B cell (primary cell): ENCODE measurements at regions of chr1 and their contacts with region 1.

Region 1: DNA sequence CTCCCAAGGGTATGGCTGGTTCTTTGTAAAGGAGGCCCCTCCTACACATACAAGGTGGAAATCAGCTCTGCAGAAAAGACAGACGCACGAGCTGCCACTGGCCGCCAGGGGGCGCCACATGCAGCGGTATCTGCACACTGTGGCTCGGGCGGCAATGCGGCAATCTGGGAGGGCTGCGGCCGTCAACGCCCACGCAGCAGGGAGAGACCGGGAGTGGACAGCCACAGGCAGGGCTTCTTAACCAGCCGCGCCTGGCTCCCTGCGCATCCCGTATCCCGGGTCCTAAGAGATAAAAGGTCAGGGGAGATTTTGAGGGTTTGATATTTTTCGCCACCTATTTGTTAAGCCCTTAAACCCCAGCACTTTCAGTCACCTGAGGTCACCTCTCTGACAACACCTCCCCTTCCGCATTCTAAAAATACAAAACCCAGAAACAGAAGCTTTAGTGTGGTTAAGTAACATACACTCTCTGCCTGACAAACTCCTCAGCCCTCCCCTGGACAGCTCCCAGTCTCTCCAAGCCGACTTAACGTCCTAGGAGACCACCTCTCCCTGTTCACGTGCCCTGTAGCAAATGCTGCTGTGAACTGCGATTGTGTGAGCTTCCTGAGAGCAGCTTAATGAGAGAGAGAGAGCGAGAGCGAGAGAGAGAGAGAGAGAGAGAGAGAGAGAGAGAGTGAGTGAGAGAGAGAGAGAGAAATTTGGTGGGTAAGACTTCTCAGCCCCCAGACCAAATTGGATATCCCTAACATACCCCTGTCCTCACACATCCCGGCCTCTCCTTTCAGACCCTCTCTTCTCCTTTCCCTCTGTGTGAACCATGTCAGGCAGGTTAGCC is 13.5 kb upstream of the KCNA2 start:
- DNase-seq: peak; percentile 94
- ATAC-seq: peak; percentile 86
- H3K4me3 ChIP-seq: peak overlapping the region; percentile 16 to 77 (median 72)
- H3K4me3 Mint-ChIP-seq: peak overlapping the region; percentile 91
- H3K27ac ChIP-seq: peak overlapping the region; percentile 66 to 89
- H3K27ac Mint-ChIP-seq: peak overlapping the region; percentile 95
- H3K4me1 ChIP-seq: peaks cover 20 to 30% of the 10 kb centered on the region in 2 donors
- H3K4me1 Mint-ChIP-seq: peaks cover 30% of the 10 kb centered on the region
- H3K27me3 ChIP-seq: peaks cover 0 to 5% (median 2%) of the 10 kb centered on the region in 4 experiments
- H3K27me3 Mint-ChIP-seq: peaks cover 4% of the 10 kb centered on the region
- CTCF ChIP-seq: peak; percentile 95

Region 2: GRCh38 chr1:110554871-110555801 is 64.5 kb before region 1 on chr1:
- CTCF ChIA-PET with region 1: interaction called, 16 read pairs
- POLR2A ChIA-PET with region 1: no interaction called
- intact Hi-C with region 1: no loop called
- DNase-seq: peak; percentile 74
- ATAC-seq: peak; percentile 93
- H3K4me3 ChIP-seq: peak overlapping the region in 2 of 5 experiments; percentile 20 to 27
- H3K4me3 Mint-ChIP-seq: peak overlapping the region; percentile 50
- H3K27ac ChIP-seq: no peak overlapping the region
- H3K27ac Mint-ChIP-seq: no peak overlapping the region
- H3K4me1 ChIP-seq: peaks cover 9 to 12% of the 10 kb centered on the region in 2 donors
- H3K4me1 Mint-ChIP-seq: peaks cover 4% of the 10 kb centered on the region
- H3K27me3 ChIP-seq: peaks cover 0 to 57% (median 24%) of the 10 kb centered on the region in 4 experiments
- H3K27me3 Mint-ChIP-seq: peaks cover 78% of the 10 kb centered on the region
- CTCF ChIP-seq: peak; percentile 83

Region 3: GRCh38 chr1:110576441-110576840 is 43.2 kb before region 1 on chr1:
- CTCF ChIA-PET with region 1: no interaction called
- POLR2A ChIA-PET with region 1: no interaction called
- intact Hi-C with region 1: no loop called
- DNase-seq: no peak
- ATAC-seq: no peak
- H3K4me3 ChIP-seq: no peak overlapping the region
- H3K4me3 Mint-ChIP-seq: no peak overlapping the region
- H3K27ac ChIP-seq: no peak overlapping the region
- H3K27ac Mint-ChIP-seq: no peak overlapping the region
- H3K4me1 ChIP-seq: no peaks in the 10 kb centered on the region
- H3K4me1 Mint-ChIP-seq: no peaks in the 10 kb centered on the region
- H3K27me3 ChIP-seq: peaks cover 0 to 28% (median 5%) of the 10 kb centered on the region in 4 experiments
- H3K27me3 Mint-ChIP-seq: peaks cover 33% of the 10 kb centered on the region
- CTCF ChIP-seq: no peak

Region 4: GRCh38 chr1:110630839-110631663 is 11.4 kb after region 1 on chr1:
- CTCF ChIA-PET with region 1: interaction called, 59 read pairs
- POLR2A ChIA-PET with region 1: interaction called, 5 read pairs
- intact Hi-C with region 1: loop called (anchors 1 kb)
- DNase-seq: peak; percentile 86
- ATAC-seq: peak; percentile 76
- H3K4me3 ChIP-seq: peak overlapping the region in 2 of 5 experiments; percentile 13 to 28
- H3K4me3 Mint-ChIP-seq: no peak overlapping the region
- H3K27ac ChIP-seq: peak overlapping the region in 1 of 2 donors; percentile 65
- H3K27ac Mint-ChIP-seq: no peak overlapping the region
- H3K4me1 ChIP-seq: peaks cover 56 to 65% of the 10 kb centered on the region in 2 donors
- H3K4me1 Mint-ChIP-seq: peaks cover 43% of the 10 kb centered on the region
- H3K27me3 ChIP-seq: no peaks in the 10 kb centered on the region
- H3K27me3 Mint-ChIP-seq: no peaks in the 10 kb centered on the region
- CTCF ChIP-seq: peak; percentile 88

Region 5: GRCh38 chr1:110674337-110675059 is 54.9 kb after region 1 on chr1 and contains the start of gene KCNA3:
- CTCF ChIA-PET with region 1: interaction called, 17 read pairs
- POLR2A ChIA-PET with region 1: interaction called, 5 read pairs
- intact Hi-C with region 1: loop called (anchors 1 kb)
- DNase-seq: peak; percentile 79
- ATAC-seq: peak; percentile 59
- H3K4me3 ChIP-seq: peak within 1 kb of the TSS in 4 of 5 experiments; percentile 50 to 67 (median 62)
- H3K4me3 Mint-ChIP-seq: peak within 1 kb of the TSS; percentile 84
- H3K27ac ChIP-seq: peak within 1 kb of the TSS; percentile 68 to 76
- H3K27ac Mint-ChIP-seq: peak within 1 kb of the TSS; percentile 81
- H3K4me1 ChIP-seq: peaks cover 38 to 43% of the 10 kb centered on the region in 2 donors
- H3K4me1 Mint-ChIP-seq: peaks cover 54% of the 10 kb centered on the region
- H3K27me3 ChIP-seq: no peaks in the 10 kb centered on the region
- H3K27me3 Mint-ChIP-seq: no peaks in the 10 kb centered on the region
- CTCF ChIP-seq: peak; percentile 48
- total RNA-seq, gene KCNA3: 60.0 and 62.5 TPM in 2 replicates

Region 6: GRCh38 chr1:110766025-110766647 is 146.5 kb after region 1 on chr1:
- CTCF ChIA-PET with region 1: interaction called, 228 read pairs
- POLR2A ChIA-PET with region 1: interaction called, 13 read pairs
- intact Hi-C with region 1: loop called (anchors 1 kb)
- DNase-seq: peak; percentile 77
- ATAC-seq: peak; percentile 73
- H3K4me3 ChIP-seq: no peak overlapping the region
- H3K4me3 Mint-ChIP-seq: no peak overlapping the region
- H3K27ac ChIP-seq: no peak overlapping the region
- H3K27ac Mint-ChIP-seq: no peak overlapping the region
- H3K4me1 ChIP-seq: peaks cover 0 to 3% of the 10 kb centered on the region in 2 donors
- H3K4me1 Mint-ChIP-seq: peaks cover 2% of the 10 kb centered on the region
- H3K27me3 ChIP-seq: peaks cover 0 to 8% (median 3%) of the 10 kb centered on the region in 4 experiments
- H3K27me3 Mint-ChIP-seq: peaks cover 17% of the 10 kb centered on the region
- CTCF ChIP-seq: peak; percentile 92

Region 7: DNA sequence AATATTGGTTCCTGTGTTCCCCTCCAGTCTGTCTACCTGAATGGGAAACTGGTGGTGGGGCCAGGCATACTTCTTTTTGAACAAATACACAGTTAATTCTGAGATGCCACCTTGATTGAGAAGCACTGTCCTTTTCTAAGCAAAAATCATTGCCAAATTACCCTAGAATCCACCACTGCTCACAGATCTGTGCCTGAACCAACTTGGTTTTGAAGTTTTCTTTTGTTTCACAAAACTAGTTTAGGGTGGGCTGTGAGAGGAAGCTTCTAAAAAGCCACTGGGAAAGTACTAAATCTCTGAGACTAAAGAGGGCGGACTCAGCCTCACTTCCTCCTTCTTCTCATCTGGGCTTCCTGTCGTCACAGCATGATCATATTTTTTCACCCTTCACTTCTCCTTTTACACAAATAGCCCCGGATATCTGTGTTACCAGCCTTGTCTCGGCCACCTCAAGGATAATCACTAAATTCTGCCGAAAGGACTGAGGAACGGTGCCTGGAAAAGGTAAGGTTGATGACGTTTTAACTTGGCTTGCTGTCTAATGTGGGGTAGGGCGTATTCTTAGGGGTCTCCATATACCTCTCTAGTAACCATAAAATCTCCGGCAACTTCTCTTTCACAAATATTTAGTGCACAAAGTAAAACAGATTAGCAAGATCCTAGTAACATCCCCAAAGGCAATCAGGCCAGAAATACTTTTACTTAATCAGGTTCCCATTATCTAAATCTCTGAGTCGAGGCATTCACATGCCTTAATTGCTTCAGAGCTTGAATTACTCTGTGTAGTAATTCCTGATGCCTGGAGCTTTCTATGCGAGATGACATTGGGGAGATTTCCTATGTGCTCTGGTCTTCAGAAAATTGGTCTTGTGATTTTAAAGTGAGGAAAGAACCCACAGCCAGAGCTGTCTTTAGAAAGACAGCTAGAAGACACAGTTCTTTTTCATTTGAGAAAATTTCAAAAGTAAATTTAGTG is 253.4 kb after region 1 on chr1 and contains the start of gene CD53:
- CTCF ChIA-PET with region 1: interaction called, 20 read pairs
- POLR2A ChIA-PET with region 1: interaction called, 3 read pairs
- intact Hi-C with region 1: loop called (anchors 1 kb)
- DNase-seq: peak; percentile 92
- ATAC-seq: peak; percentile 66
- H3K4me3 ChIP-seq: peak within 1 kb of the TSS; percentile 73 to 100 (median 97)
- H3K4me3 Mint-ChIP-seq: peak within 1 kb of the TSS; percentile 99
- H3K27ac ChIP-seq: peak within 1 kb of the TSS; percentile 96 to 99
- H3K27ac Mint-ChIP-seq: peak within 1 kb of the TSS; percentile 99
- H3K4me1 ChIP-seq: peaks cover 60% of the 10 kb centered on the region in 2 donors
- H3K4me1 Mint-ChIP-seq: peaks cover 70% of the 10 kb centered on the region
- H3K27me3 ChIP-seq: no peaks in the 10 kb centered on the region
- H3K27me3 Mint-ChIP-seq: no peaks in the 10 kb centered on the region
- CTCF ChIP-seq: no peak
- total RNA-seq, gene CD53: 490 and 495 TPM in 2 replicates

Region 8: GRCh38 chr1:110986407-110986891 is 366.8 kb after region 1 on chr1:
- CTCF ChIA-PET with region 1: interaction called, 20 read pairs
- POLR2A ChIA-PET with region 1: no interaction called
- intact Hi-C with region 1: no loop called
- DNase-seq: no peak
- ATAC-seq: no peak
- H3K4me3 ChIP-seq: no peak overlapping the region
- H3K4me3 Mint-ChIP-seq: no peak overlapping the region
- H3K27ac ChIP-seq: no peak overlapping the region
- H3K27ac Mint-ChIP-seq: no peak overlapping the region
- H3K4me1 ChIP-seq: peaks cover 0 to 8% of the 10 kb centered on the region in 2 donors
- H3K4me1 Mint-ChIP-seq: peaks cover 7% of the 10 kb centered on the region
- H3K27me3 ChIP-seq: peaks cover 0 to 10% (median 4%) of the 10 kb centered on the region in 4 experiments
- H3K27me3 Mint-ChIP-seq: peaks cover 25% of the 10 kb centered on the region
- CTCF ChIP-seq: no peak